Right ventricle myocardium inferior (tissue), 1 donor: ENCODE measurements at regions of chr1 and their contacts with region 1.

Region 1: DNA sequence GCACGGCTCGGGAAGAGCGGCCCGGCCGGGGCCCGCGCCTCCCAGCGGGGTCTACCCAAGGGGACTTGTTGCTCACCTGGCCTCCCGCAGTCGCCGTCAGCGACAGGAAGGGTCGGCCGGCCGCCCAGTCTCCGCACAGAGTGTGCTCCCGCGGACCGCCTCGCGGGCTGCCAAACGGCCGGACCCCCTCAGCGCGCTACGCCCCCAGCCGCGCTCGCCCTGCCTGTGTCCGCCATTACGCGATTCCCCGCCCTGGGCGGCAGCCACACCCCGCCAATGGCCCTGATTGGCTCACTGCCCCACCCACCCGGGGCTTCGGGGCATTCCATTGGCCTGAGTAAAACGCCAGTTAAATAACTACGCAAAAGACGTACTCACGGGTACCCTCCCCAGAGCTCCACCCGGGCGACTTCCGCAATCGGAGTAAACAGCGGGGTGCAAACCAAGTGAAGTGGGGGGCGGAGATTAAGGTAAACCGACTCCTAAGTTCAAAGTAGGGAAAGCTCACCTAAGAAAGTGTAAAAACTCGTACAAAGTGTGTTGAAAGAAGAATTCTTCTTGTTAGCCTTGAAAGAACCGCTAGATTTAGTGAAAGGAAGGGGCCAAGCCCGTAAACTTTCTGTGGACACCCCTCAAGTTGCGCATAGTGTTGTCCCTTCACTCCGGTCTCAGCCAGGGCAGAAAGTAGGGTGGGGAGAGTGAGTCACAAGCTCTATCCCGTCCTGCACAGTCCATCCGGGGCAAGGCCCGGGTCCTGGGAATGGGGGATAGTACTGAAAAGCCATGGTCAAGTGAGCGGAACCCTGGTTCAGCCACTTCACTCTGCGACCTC is at the start of gene WASF2:
- DNase-seq: peak; percentile 98
- ATAC-seq: peak; percentile 96
- total RNA-seq, gene WASF2: 57.3 TPM

Region 2: DNA sequence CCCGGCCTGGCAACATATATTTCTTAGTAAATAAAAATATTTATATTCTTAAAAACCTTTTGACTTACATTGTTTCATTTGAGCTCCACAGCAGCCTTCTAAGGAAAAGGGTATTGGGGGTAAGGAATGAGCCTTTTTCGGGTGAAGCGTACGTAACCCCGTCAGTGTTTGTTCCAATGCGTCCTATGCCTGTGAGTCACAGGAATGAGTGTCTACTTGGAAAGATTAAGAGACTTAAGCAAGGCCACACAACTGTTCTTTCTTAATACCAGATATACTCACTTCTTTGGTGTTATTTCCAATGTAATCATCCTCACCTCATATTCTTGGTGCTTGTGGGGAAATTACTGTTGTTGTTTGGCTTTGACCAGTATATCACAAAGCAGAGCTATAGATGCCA is 233.0 kb before region 1 on chr1:
- intact Hi-C with region 1: no loop called
- DNase-seq: no peak
- ATAC-seq: no peak

Region 3: GRCh38 chr1:27430903-27431600 is 59.1 kb before region 1 on chr1:
- intact Hi-C with region 1: loop called (anchors 2 kb)
- DNase-seq: no peak
- ATAC-seq: peak; percentile 59

Region 4: GRCh38 chr1:27556781-27557595 is 66.9 kb after region 1 on chr1:
- intact Hi-C with region 1: loop called (anchors 5 kb)
- DNase-seq: peak; percentile 96
- ATAC-seq: peak; percentile 69